Endothelial cell of umbilical vein (primary cell): ENCODE measurements at regions of chr11 and their contacts with region 1.

Region 1: GRCh38 chr11:119205574-119206510 is at the start of gene CBL:
- DNase-seq: peak; percentile 90
- H3K4me3 ChIP-seq: peak within 1 kb of the TSS; percentile 88 to 97 (median 93)
- H3K27ac ChIP-seq: peak within 1 kb of the TSS; percentile 55
- H3K4me1 ChIP-seq: peaks cover 17% of the 10 kb centered on the region
- H3K27me3 ChIP-seq: no peaks in the 10 kb centered on the region
- CTCF ChIP-seq: peak; percentile 81 to 95
- POLR2A ChIP-seq: peak; percentile 35
- total RNA-seq, gene CBL: 40.1 and 41.5 TPM in 2 replicates

Region 2: DNA sequence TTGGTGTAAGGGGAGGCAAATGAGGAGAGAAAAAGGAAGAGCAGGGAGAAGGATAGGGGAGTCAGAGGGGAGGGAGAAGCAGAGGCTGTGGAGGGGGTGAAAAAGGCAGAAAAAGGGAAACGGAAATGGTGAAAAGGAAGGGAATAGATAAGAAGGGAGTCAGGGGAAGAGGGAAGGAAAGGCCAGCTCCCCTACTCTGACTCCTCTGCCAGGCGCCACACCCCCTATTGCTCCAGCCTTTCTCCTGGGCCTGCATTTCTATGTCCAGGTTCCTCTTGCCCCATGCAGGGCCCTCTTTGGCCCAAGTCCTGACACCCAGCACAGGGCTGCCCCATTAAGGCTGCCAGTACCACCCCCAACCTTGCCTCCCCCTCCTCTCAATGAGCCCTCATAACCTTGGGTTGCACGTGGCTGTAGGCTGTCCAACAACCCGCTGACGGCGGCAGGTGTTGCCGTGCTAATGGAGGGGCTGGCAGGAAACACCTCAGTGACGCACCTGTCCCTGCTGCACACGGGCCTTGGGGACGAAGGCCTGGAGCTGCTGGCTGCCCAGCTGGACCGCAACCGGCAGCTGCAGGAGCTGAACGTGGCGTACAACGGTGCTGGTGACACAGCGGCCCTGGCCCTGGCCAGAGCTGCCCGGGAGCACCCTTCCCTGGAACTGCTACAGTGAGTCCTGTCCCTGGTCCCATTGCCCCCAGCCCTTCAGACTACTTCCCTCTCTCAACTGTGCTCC is 24.0 kb before region 1 on chr11:
- CTCF ChIA-PET with region 1: no interaction called
- POLR2A ChIA-PET with region 1: no interaction called
- dilution Hi-C with region 1: no loop called
- intact Hi-C with region 1: no loop called
- DNase-seq: no peak
- H3K4me3 ChIP-seq: no peak overlapping the region
- H3K27ac ChIP-seq: no peak overlapping the region
- H3K4me1 ChIP-seq: peaks cover 21% of the 10 kb centered on the region
- H3K27me3 ChIP-seq: peaks cover 0 to 2% of the 10 kb centered on the region in 2 experiments
- CTCF ChIP-seq: no peak
- POLR2A ChIP-seq: no peak

Region 3: DNA sequence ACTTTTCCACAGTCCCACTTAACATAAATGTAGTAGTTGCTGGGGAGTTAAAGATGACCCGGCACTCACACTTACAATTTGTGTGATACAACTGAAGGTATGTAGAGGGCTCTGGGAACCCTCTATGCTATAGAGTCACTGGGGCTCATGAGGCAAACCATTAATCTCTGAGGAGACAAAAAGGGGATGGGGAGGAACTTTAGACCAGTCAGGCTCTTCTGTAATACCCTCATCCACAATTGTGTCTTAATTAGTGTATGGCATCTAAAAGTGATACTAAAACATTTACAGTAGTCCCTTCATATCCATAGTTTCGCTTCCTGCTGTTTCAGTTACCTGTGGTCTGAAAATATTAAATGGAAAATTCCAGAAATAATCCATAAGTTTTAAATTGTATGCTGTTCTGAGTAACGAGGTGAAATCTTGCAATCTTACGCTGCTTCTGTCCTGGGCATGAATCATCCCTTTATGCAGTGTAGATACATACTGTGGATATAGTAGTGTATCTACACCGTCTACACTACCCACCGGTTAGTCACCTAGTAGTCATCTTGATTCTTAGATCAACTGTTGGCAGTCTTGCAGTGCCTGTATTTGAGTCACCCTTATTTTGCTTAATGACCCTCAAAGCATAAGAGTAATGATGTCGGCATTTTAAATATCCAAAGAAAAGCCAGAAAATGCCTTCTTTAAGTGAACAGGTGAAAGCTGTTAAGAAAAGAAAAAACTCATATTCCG is 12.5 kb after region 1 on chr11:
- CTCF ChIA-PET with region 1: interaction called, 17 read pairs
- POLR2A ChIA-PET with region 1: no interaction called
- dilution Hi-C with region 1: no loop called
- intact Hi-C with region 1: no loop called
- DNase-seq: peak; percentile 70
- H3K4me3 ChIP-seq: no peak overlapping the region
- H3K27ac ChIP-seq: peak overlapping the region; percentile 39
- H3K4me1 ChIP-seq: peaks cover 6% of the 10 kb centered on the region
- H3K27me3 ChIP-seq: no peaks in the 10 kb centered on the region
- CTCF ChIP-seq: no peak
- POLR2A ChIP-seq: peak; percentile 24

Region 4: GRCh38 chr11:119262668-119263351 is 57.0 kb after region 1 on chr11:
- CTCF ChIA-PET with region 1: interaction called, 20 read pairs
- POLR2A ChIA-PET with region 1: interaction called, 3 read pairs
- dilution Hi-C with region 1: no loop called
- intact Hi-C with region 1: loop called (anchors 1 kb)
- DNase-seq: peak; percentile 71
- H3K4me3 ChIP-seq: no peak overlapping the region
- H3K27ac ChIP-seq: peak overlapping the region; percentile 73
- H3K4me1 ChIP-seq: peaks cover 24% of the 10 kb centered on the region
- H3K27me3 ChIP-seq: no peaks in the 10 kb centered on the region
- CTCF ChIP-seq: peak in 1 of 2 donors; percentile 4
- POLR2A ChIP-seq: no peak

Region 5: DNA sequence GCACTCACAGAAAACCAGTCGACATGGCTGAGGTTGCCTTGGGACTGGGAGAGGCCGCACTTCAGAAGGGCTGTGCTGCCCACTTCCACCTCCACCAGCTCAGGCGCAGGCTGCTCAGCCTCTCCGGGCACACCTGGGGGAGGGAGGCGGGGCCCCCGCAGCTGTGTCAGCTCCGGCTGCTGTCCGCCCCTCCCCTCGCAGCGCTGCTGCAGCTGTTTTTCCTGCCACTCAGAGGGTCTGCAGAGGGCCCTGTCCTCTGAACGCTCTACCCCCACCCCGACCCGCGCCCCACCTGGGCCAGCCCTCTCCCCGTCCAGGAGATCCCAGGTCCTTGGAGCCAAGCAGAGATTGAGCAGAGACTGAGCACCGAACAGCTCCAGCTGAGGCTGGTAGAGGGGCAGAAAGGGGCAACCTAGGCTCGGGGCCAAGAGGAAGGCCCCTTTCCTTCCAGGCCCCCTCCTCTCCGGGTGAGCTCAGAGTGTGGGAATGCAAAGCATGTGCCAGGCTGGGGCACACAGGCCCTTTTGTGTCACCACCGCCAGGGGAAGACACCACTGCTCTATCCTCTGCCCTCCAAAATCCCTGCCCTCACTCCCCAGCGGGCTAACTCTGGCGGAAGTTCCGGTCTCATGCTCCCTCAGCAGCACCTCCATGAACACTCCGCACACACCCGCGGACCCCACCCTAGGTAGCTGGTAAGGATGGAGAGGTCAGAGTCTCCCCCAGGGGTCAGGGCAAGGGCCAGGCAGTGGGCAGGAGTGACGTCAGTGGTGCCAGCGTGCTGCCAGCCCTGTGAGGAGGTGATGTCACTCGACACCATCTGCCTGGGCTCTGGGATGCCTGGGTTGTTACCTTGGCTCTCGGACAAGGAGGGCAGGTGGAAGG is 109.5 kb after region 1 on chr11:
- CTCF ChIA-PET with region 1: interaction called, 17 read pairs
- POLR2A ChIA-PET with region 1: no interaction called
- dilution Hi-C with region 1: no loop called
- intact Hi-C with region 1: no loop called
- DNase-seq: peak; percentile 49
- H3K4me3 ChIP-seq: peak overlapping the region; percentile 87 to 93 (median 89)
- H3K27ac ChIP-seq: peak overlapping the region; percentile 80
- H3K4me1 ChIP-seq: peaks cover 44% of the 10 kb centered on the region
- H3K27me3 ChIP-seq: no peaks in the 10 kb centered on the region
- CTCF ChIP-seq: peak; percentile 16 to 46
- POLR2A ChIP-seq: no peak

Region 6: GRCh38 chr11:119373921-119374631 is 168.2 kb after region 1 on chr11:
- CTCF ChIA-PET with region 1: interaction called, 3 read pairs
- POLR2A ChIA-PET with region 1: no interaction called
- dilution Hi-C with region 1: no loop called
- intact Hi-C with region 1: loop called (anchors 5 kb)
- DNase-seq: peak; percentile 79
- H3K4me3 ChIP-seq: no peak overlapping the region
- H3K27ac ChIP-seq: no peak overlapping the region
- H3K4me1 ChIP-seq: no peaks in the 10 kb centered on the region
- H3K27me3 ChIP-seq: no peaks in the 10 kb centered on the region
- CTCF ChIP-seq: peak; percentile 90 to 92
- POLR2A ChIP-seq: no peak